ENCODE measurements at regions of chr3 and their contacts with region 1.

Region 1: GRCh38 chr3:25664810-25665314 is at the start of gene TOP2B:
- DNase-seq: peak; percentile 94 to 95
- H3K4me3 ChIP-seq: peak within 1 kb of the TSS; percentile 86
- H3K4me3 Mint-ChIP-seq: peak within 1 kb of the TSS; percentile 94
- H3K27ac Mint-ChIP-seq: peak within 1 kb of the TSS; percentile 99
- H3K4me1 ChIP-seq: no peaks in the 10 kb centered on the region
- H3K4me1 Mint-ChIP-seq: peaks cover 7% of the 10 kb centered on the region
- H3K27me3 ChIP-seq: no peaks in the 10 kb centered on the region
- H3K27me3 Mint-ChIP-seq: peaks cover 7% of the 10 kb centered on the region
- CTCF ChIP-seq: no peak
- total RNA-seq, gene TOP2B: 82.4 and 83.1 TPM in 2 replicates

Region 2: GRCh38 chr3:25678581-25678980 is 13.7 kb after region 1 on chr3:
- CTCF ChIA-PET with region 1: no interaction called
- POLR2A ChIA-PET with region 1: no interaction called
- intact Hi-C with region 1: no loop called
- DNase-seq: no peak
- H3K4me3 ChIP-seq: no peak overlapping the region
- H3K4me3 Mint-ChIP-seq: no peak overlapping the region
- H3K27ac Mint-ChIP-seq: no peak overlapping the region
- H3K4me1 ChIP-seq: no peaks in the 10 kb centered on the region
- H3K4me1 Mint-ChIP-seq: no peaks in the 10 kb centered on the region
- H3K27me3 ChIP-seq: no peaks in the 10 kb centered on the region
- H3K27me3 Mint-ChIP-seq: peaks cover 3% of the 10 kb centered on the region
- CTCF ChIP-seq: no peak

Region 3: GRCh38 chr3:25782938-25783660 is 118.2 kb after region 1 on chr3 and contains the start of gene NGLY1:
- CTCF ChIA-PET with region 1: no interaction called
- POLR2A ChIA-PET with region 1: interaction called, 23 read pairs
- intact Hi-C with region 1: loop called (anchors 2 kb)
- DNase-seq: peak; percentile 82 to 89
- H3K4me3 ChIP-seq: peak within 1 kb of the TSS; percentile 92
- H3K4me3 Mint-ChIP-seq: peak within 1 kb of the TSS; percentile 75
- H3K27ac Mint-ChIP-seq: peak within 1 kb of the TSS; percentile 45
- H3K4me1 ChIP-seq: peaks cover 10% of the 10 kb centered on the region
- H3K4me1 Mint-ChIP-seq: peaks cover 18% of the 10 kb centered on the region
- H3K27me3 ChIP-seq: no peaks in the 10 kb centered on the region
- H3K27me3 Mint-ChIP-seq: no peaks in the 10 kb centered on the region
- CTCF ChIP-seq: no peak
- total RNA-seq, gene NGLY1: 27.1 and 28.7 TPM in 2 replicates

Region 4: GRCh38 chr3:25820366-25820765 is 155.5 kb after region 1 on chr3:
- CTCF ChIA-PET with region 1: no interaction called
- POLR2A ChIA-PET with region 1: no interaction called
- intact Hi-C with region 1: no loop called
- DNase-seq: no peak
- H3K4me3 ChIP-seq: no peak overlapping the region
- H3K4me3 Mint-ChIP-seq: no peak overlapping the region
- H3K27ac Mint-ChIP-seq: no peak overlapping the region
- H3K4me1 ChIP-seq: no peaks in the 10 kb centered on the region
- H3K4me1 Mint-ChIP-seq: no peaks in the 10 kb centered on the region
- H3K27me3 ChIP-seq: no peaks in the 10 kb centered on the region; the same call in none of the 2 replicates
- H3K27me3 Mint-ChIP-seq: peaks cover 4% of the 10 kb centered on the region
- CTCF ChIP-seq: no peak

Region 5: DNA sequence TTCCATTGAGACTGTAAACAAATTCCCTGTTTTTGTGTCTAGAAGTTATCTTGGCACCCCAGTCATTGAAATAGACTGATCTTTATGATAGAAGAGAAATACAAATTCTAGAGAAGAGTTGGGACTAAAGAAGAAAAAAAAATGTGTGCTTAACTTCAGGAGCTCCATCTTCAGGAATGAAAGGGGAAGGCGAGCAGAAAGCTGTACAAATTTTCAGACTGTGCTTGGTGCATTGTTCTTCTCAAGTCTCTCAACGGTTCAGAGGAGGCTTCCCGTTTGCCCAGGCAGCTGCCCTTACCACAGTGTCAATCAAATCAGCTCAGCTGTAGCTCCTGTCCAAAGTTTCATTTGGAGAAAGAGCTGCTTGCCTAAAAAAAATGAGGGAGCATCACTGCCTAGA is 166.7 kb after region 1 on chr3:
- CTCF ChIA-PET with region 1: no interaction called
- POLR2A ChIA-PET with region 1: no interaction called
- intact Hi-C with region 1: loop called (anchors 5 kb)
- DNase-seq: no peak
- H3K4me3 ChIP-seq: no peak overlapping the region
- H3K4me3 Mint-ChIP-seq: no peak overlapping the region
- H3K27ac Mint-ChIP-seq: no peak overlapping the region
- H3K4me1 ChIP-seq: no peaks in the 10 kb centered on the region
- H3K4me1 Mint-ChIP-seq: no peaks in the 10 kb centered on the region
- H3K27me3 ChIP-seq: no peaks in the 10 kb centered on the region; the same call in 1 of the 2 replicates
- H3K27me3 Mint-ChIP-seq: peaks cover 3% of the 10 kb centered on the region
- CTCF ChIP-seq: no peak

Region 6: GRCh38 chr3:25856902-25857518 is 192.1 kb after region 1 on chr3:
- CTCF ChIA-PET with region 1: no interaction called
- POLR2A ChIA-PET with region 1: no interaction called
- intact Hi-C with region 1: loop called (anchors 5 kb)
- DNase-seq: peak in 1 of 2 experiments; percentile 31
- H3K4me3 ChIP-seq: no peak overlapping the region
- H3K4me3 Mint-ChIP-seq: no peak overlapping the region
- H3K27ac Mint-ChIP-seq: no peak overlapping the region
- H3K4me1 ChIP-seq: no peaks in the 10 kb centered on the region
- H3K4me1 Mint-ChIP-seq: no peaks in the 10 kb centered on the region
- H3K27me3 ChIP-seq: no peaks in the 10 kb centered on the region
- H3K27me3 Mint-ChIP-seq: peaks cover 3% of the 10 kb centered on the region
- CTCF ChIP-seq: peak; percentile 36 to 78

Region 7: GRCh38 chr3:25962249-25962648 is 297.4 kb after region 1 on chr3:
- CTCF ChIA-PET with region 1: no interaction called
- POLR2A ChIA-PET with region 1: no interaction called
- intact Hi-C with region 1: no loop called
- DNase-seq: peak in 1 of 2 experiments; percentile 36
- H3K4me3 ChIP-seq: no peak overlapping the region
- H3K4me3 Mint-ChIP-seq: no peak overlapping the region
- H3K27ac Mint-ChIP-seq: no peak overlapping the region
- H3K4me1 ChIP-seq: no peaks in the 10 kb centered on the region
- H3K4me1 Mint-ChIP-seq: no peaks in the 10 kb centered on the region
- H3K27me3 ChIP-seq: no peaks in the 10 kb centered on the region
- H3K27me3 Mint-ChIP-seq: no peaks in the 10 kb centered on the region
- CTCF ChIP-seq: peak; percentile 34 to 61

Measured in Caco-2 (cell line).